CD14-positive monocyte (primary cell): ENCODE measurements at regions of chr2 and their contacts with region 1.

Region 1: DNA sequence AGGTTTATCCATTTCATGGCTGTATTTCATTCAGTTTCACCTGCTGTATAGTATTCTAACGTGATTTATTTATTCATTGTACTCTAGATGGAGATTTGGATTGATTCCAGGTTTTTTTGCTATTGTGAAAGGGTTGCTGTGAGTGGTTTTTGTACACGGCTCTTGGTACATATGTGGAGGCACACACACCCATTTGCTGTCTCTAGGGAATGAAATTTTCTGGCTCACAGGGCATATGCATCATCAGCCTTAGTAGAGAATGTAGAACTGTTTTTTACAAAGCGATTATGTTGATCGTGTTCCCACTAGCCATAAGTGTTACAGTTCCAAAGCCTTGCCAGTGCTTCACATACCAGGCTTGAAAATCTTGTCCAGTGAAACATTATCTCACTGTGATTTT is 5.1 kb downstream of the SPTBN1 start:
- DNase-seq: no peak
- H3K4me3 ChIP-seq: no peak overlapping the region
- H3K4me3 Mint-ChIP-seq: no peak overlapping the region
- H3K27ac ChIP-seq: no peak overlapping the region
- H3K27ac Mint-ChIP-seq: no peak overlapping the region
- H3K4me1 ChIP-seq: peaks cover 4 to 13% of the 10 kb centered on the region in 2 donors
- H3K4me1 Mint-ChIP-seq: peaks cover 6% of the 10 kb centered on the region
- H3K27me3 ChIP-seq: peaks cover 29 to 40% of the 10 kb centered on the region in 2 donors
- H3K27me3 Mint-ChIP-seq: peaks cover 37 to 48% (median 37%) of the 10 kb centered on the region in 3 donors
- CTCF ChIP-seq: no peak

Region 2: GRCh38 chr2:54212456-54212855 is 248.8 kb before region 1 on chr2:
- intact Hi-C with region 1: loop called in 1 of 2 experiments (anchors 10 kb)
- DNase-seq: no peak
- H3K4me3 ChIP-seq: no peak overlapping the region
- H3K4me3 Mint-ChIP-seq: no peak overlapping the region
- H3K27ac ChIP-seq: no peak overlapping the region
- H3K27ac Mint-ChIP-seq: no peak overlapping the region
- H3K4me1 ChIP-seq: no peaks in the 10 kb centered on the region
- H3K4me1 Mint-ChIP-seq: no peaks in the 10 kb centered on the region
- H3K27me3 ChIP-seq: no peaks in the 10 kb centered on the region
- H3K27me3 Mint-ChIP-seq: peaks cover 0 to 2% (median 0%) of the 10 kb centered on the region in 3 donors
- CTCF ChIP-seq: no peak

Region 3: DNA sequence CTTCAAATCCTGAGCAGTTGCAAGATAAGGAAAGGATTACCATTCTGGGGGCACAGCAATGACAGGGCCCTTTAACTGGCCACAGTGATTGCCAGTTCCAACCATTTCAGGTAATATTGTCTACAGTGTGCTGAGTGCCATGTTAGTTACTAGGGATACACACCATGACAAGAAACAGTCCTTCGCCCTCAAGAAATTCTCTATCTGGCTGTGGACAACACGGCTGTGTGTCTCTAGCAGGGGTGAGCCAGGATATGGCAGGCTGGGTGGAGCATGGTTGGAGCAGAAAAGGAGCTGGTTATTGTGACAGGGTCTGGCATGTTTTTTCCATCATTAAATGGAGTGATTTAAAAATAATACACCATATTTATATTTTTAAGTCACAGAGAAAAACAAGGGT is 236.3 kb before region 1 on chr2:
- intact Hi-C with region 1: no loop called
- DNase-seq: no peak
- H3K4me3 ChIP-seq: no peak overlapping the region
- H3K4me3 Mint-ChIP-seq: no peak overlapping the region
- H3K27ac ChIP-seq: no peak overlapping the region
- H3K27ac Mint-ChIP-seq: no peak overlapping the region
- H3K4me1 ChIP-seq: no peaks in the 10 kb centered on the region
- H3K4me1 Mint-ChIP-seq: no peaks in the 10 kb centered on the region
- H3K27me3 ChIP-seq: no peaks in the 10 kb centered on the region
- H3K27me3 Mint-ChIP-seq: no peaks in the 10 kb centered on the region
- CTCF ChIP-seq: no peak

Region 4: GRCh38 chr2:54350426-54350825 is 110.8 kb before region 1 on chr2:
- intact Hi-C with region 1: no loop called
- DNase-seq: no peak
- H3K4me3 ChIP-seq: no peak overlapping the region
- H3K4me3 Mint-ChIP-seq: no peak overlapping the region
- H3K27ac ChIP-seq: no peak overlapping the region
- H3K27ac Mint-ChIP-seq: no peak overlapping the region
- H3K4me1 ChIP-seq: no peaks in the 10 kb centered on the region
- H3K4me1 Mint-ChIP-seq: no peaks in the 10 kb centered on the region
- H3K27me3 ChIP-seq: no peaks in the 10 kb centered on the region
- H3K27me3 Mint-ChIP-seq: peaks cover 0 to under 1% (median 0%) of the 10 kb centered on the region in 3 donors
- CTCF ChIP-seq: no peak